ENCODE measurements at regions of chr10 and their contacts with region 1.

Region 1: DNA sequence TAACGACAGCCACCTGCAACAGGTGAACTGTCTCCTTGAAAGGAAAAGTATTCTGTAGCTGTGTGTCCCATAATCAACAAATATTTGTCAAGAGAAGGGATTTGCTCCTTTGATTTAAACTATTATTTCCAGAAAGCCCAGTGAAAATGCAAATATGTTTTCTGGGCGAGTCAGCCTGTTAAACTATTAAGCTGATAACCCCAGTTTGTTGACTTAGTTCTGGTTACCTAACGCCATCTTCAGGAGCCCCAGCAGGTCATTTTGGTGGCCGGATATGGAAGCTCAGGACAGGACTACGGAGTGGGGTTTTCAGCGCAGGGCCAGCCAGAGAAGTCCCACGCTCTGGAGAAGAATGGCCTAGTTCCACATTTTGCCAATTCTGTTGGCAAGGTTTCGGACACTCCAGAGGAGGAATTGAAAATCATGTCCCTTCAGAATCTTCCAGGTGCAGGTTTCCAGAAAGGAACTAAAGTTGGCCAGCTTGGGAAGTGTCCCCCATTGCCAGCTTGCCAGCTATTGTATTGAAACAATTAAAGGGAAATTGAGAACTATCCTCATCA is 54.5 kb downstream of the ADRA2A start:
- DNase-seq: no peak
- ATAC-seq: no peak
- H3K4me3 ChIP-seq: no peak overlapping the region
- H3K4me3 Mint-ChIP-seq: no peak overlapping the region
- H3K27ac ChIP-seq: no peak overlapping the region
- H3K27ac Mint-ChIP-seq: no peak overlapping the region
- H3K4me1 ChIP-seq: no peaks in the 10 kb centered on the region
- H3K4me1 Mint-ChIP-seq: no peaks in the 10 kb centered on the region
- H3K27me3 ChIP-seq: no peaks in the 10 kb centered on the region
- H3K27me3 Mint-ChIP-seq: peaks cover 27% of the 10 kb centered on the region
- CTCF ChIP-seq: no peak

Region 2: DNA sequence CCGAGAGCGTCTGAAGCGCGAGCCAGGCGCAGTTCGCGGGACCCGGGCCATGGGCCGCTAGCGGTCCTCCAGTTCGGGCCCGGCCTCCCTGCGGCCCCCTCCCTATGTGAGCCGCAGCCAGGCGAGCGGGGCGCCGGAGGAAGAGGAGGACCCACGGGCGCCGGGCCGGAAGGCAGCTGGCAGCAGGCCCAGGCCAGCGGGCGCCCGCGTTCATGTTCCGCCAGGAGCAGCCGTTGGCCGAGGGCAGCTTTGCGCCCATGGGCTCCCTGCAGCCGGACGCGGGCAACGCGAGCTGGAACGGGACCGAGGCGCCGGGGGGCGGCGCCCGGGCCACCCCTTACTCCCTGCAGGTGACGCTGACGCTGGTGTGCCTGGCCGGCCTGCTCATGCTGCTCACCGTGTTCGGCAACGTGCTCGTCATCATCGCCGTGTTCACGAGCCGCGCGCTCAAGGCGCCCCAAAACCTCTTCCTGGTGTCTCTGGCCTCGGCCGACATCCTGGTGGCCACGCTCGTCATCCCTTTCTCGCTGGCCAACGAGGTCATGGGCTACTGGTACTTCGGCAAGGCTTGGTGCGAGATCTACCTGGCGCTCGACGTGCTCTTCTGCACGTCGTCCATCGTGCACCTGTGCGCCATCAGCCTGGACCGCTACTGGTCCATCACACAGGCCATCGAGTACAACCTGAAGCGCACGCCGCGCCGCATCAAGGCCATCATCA is 53.4 kb before region 1 on chr10:
- CTCF ChIA-PET with region 1: no interaction called
- POLR2A ChIA-PET with region 1: no interaction called
- intact Hi-C with region 1: no loop called
- DNase-seq: peak in 3 of 14 experiments; percentile 7 to 21 (median 16)
- ATAC-seq: no peak
- H3K4me3 ChIP-seq: peak overlapping the region; percentile 29
- H3K4me3 Mint-ChIP-seq: peak overlapping the region; percentile 82
- H3K27ac ChIP-seq: no peak overlapping the region
- H3K27ac Mint-ChIP-seq: no peak overlapping the region
- H3K4me1 ChIP-seq: peaks cover 28% of the 10 kb centered on the region
- H3K4me1 Mint-ChIP-seq: peaks cover 24% of the 10 kb centered on the region
- H3K27me3 ChIP-seq: peaks cover 44 to 54% of the 10 kb centered on the region in 2 experiments
- H3K27me3 Mint-ChIP-seq: peaks cover 68% of the 10 kb centered on the region
- CTCF ChIP-seq: no peak

Region 3: GRCh38 chr10:111297351-111297848 is 166.1 kb after region 1 on chr10:
- CTCF ChIA-PET with region 1: no interaction called
- POLR2A ChIA-PET with region 1: no interaction called
- intact Hi-C with region 1: no loop called
- DNase-seq: no peak
- ATAC-seq: no peak
- H3K4me3 ChIP-seq: no peak overlapping the region
- H3K4me3 Mint-ChIP-seq: no peak overlapping the region
- H3K27ac ChIP-seq: no peak overlapping the region
- H3K27ac Mint-ChIP-seq: no peak overlapping the region
- H3K4me1 ChIP-seq: no peaks in the 10 kb centered on the region
- H3K4me1 Mint-ChIP-seq: no peaks in the 10 kb centered on the region
- H3K27me3 ChIP-seq: peaks cover 0 to 2% of the 10 kb centered on the region in 2 experiments
- H3K27me3 Mint-ChIP-seq: peaks cover 57% of the 10 kb centered on the region
- CTCF ChIP-seq: no peak

Region 4: DNA sequence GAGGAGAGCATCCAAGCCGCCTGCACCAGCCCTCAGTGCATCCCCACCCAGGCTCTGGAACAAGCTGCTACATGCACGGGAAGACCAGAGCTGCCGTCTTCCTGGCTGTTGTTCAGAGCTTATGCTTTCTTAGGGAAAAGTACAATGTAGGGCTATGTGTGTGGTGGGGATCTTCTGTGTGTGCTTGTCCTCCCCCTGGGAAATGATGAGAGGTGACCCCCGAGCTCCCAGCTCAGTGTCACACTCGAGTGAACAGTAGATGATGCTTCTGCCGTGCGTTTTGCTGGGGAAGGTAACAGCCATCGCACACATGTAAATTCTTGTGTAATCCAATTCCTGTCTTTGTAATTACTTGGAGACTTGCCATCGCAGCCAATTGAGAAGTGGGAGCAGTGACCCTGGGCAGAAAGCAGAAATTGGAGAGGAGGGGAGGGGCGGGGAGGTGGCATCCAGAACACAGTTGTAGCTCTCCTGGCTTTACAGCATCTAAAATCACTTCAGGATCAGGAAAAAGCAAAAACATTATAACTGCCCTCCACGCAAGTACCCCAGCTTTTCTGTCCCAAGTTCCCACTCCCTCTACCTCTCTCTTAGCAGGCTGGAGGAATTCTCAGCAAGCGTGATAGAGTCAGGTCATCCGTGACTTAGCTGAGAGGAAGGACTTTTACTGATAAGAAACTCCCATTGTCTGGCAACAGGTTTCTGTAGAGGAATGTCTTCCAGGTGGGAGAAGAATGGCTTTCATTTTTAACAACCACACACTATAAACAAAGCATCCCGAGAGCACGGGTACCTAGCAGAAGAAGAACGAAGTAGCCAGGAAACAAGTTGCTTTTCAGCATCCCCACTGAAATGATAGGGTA is 1968.3 kb after region 1 on chr10:
- CTCF ChIA-PET with region 1: no interaction called
- POLR2A ChIA-PET with region 1: no interaction called
- intact Hi-C with region 1: loop called in 1 of 2 experiments (anchors 5 kb)
- DNase-seq: peak in 3 of 14 experiments; percentile 2 to 38 (median 31)
- ATAC-seq: no peak
- H3K4me3 ChIP-seq: no peak overlapping the region
- H3K4me3 Mint-ChIP-seq: no peak overlapping the region
- H3K27ac ChIP-seq: no peak overlapping the region
- H3K27ac Mint-ChIP-seq: no peak overlapping the region
- H3K4me1 ChIP-seq: peaks cover 3% of the 10 kb centered on the region
- H3K4me1 Mint-ChIP-seq: peaks cover under 1% of the 10 kb centered on the region
- H3K27me3 ChIP-seq: no peaks in the 10 kb centered on the region
- H3K27me3 Mint-ChIP-seq: no peaks in the 10 kb centered on the region
- CTCF ChIP-seq: no peak